ENCODE measurements at regions of chr11 and their contacts with region 1.

Region 1: DNA sequence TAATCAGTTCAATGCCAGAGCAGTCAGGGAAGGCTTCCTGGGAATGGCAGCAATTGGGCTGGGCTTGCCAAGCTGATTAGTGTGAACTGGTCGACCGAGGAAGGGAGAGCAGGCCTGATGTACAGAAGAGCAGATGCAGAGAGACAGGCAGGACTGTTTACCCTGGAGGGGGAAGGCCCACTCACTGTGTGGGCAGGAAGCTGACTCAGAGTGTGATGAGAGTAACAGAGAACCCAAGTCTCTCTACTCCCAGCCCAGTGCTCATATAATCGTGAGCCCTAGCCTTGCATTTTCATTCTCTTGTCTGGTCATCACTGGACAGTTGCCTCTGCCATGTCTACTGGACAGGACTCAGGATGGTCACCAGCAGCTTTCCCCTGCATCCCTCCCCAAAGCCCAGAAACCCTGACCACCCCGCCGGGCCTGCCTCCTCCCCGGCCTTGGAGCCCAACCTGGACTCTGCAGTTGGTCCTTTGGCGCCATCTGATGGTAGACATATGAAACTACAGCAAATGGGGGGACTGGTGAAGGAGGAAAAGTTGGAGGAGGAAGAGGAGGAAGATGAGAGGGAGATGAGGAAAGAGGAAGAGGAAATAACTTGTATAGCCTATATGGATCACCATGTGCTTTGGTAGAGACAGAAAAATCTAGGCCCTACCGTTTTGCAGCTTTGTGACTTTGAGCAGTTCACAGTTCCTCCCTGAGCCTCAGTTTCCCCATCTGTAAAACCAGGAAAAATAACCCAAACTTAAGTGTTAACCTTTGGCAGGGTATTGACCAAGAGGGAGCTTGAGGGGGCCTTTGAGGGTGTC is 43.4 kb upstream of the PRDM11 start:
- DNase-seq: peak; percentile 91
- ATAC-seq: peak; percentile 98
- H3K4me3 Mint-ChIP-seq: peak overlapping the region; percentile 60
- H3K27ac Mint-ChIP-seq: peak overlapping the region; percentile 78
- H3K4me1 Mint-ChIP-seq: peaks cover 13% of the 10 kb centered on the region
- H3K27me3 Mint-ChIP-seq: peaks cover 10% of the 10 kb centered on the region
- CTCF ChIP-seq: peak; percentile 98

Region 2: DNA sequence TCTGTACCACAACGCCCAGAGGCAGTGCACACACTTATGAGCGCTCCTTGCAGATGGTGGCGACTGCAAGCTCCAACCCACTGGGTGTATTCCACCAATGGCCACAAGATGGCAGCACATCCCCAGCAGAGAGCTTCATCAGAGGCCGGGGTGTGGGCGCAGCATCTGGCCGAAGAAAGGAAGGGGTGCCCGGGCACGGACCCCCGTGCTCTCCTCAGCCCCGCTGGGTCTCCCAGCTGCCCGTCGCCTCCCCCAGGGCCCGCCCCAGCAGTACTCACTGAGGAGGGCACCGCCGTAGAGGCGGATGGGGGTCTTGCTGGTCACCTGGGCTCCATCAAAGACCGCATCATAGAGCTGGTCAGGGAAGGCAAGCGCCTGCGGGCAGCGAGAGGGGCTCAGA is 166.5 kb before region 1 on chr11:
- CTCF ChIA-PET with region 1: interaction called, 942 read pairs
- POLR2A ChIA-PET with region 1: interaction called, 27 read pairs
- intact Hi-C with region 1: loop called (anchors 1 kb)
- DNase-seq: peak; percentile 88
- ATAC-seq: peak; percentile 97
- H3K4me3 Mint-ChIP-seq: no peak overlapping the region
- H3K27ac Mint-ChIP-seq: no peak overlapping the region
- H3K4me1 Mint-ChIP-seq: no peaks in the 10 kb centered on the region
- H3K27me3 Mint-ChIP-seq: no peaks in the 10 kb centered on the region
- CTCF ChIP-seq: peak; percentile 97

Region 3: GRCh38 chr11:44964526-44965209 is 138.3 kb before region 1 on chr11:
- CTCF ChIA-PET with region 1: interaction called, 10 read pairs
- POLR2A ChIA-PET with region 1: no interaction called
- intact Hi-C with region 1: no loop called
- DNase-seq: no peak
- ATAC-seq: no peak
- H3K4me3 Mint-ChIP-seq: no peak overlapping the region
- H3K27ac Mint-ChIP-seq: no peak overlapping the region
- H3K4me1 Mint-ChIP-seq: no peaks in the 10 kb centered on the region
- H3K27me3 Mint-ChIP-seq: no peaks in the 10 kb centered on the region
- CTCF ChIP-seq: no peak

Region 4: DNA sequence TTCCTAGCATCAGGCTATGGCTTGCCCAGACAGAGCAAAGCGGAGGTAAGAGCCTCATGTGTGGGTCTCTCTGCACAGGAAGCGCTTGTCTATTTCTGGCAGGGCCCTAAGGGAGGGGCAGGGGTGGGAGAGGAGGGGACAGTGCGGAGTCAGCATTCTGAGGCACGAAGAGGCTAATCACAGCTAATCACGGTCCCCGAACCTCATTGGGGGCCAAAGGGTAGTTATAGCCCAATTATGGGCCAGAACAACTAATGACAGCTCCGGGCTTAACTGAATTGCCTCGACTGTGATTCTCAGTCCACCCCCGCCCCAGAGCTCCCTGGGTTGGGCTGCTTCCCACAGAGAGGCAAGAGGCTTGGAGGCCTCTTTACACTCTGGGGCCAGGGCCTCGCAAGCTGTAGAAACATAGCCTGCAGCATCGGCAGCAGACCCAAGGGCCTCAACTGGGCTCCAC is 29.3 kb before region 1 on chr11:
- CTCF ChIA-PET with region 1: interaction called, 37 read pairs
- POLR2A ChIA-PET with region 1: interaction called, 3 read pairs
- intact Hi-C with region 1: no loop called
- DNase-seq: peak; percentile 37
- ATAC-seq: peak; percentile 88
- H3K4me3 Mint-ChIP-seq: no peak overlapping the region
- H3K27ac Mint-ChIP-seq: no peak overlapping the region
- H3K4me1 Mint-ChIP-seq: peaks cover 13% of the 10 kb centered on the region
- H3K27me3 Mint-ChIP-seq: no peaks in the 10 kb centered on the region
- CTCF ChIP-seq: no peak

Region 5: GRCh38 chr11:45089676-45090499 is 13.1 kb before region 1 on chr11:
- CTCF ChIA-PET with region 1: interaction called, 16 read pairs
- POLR2A ChIA-PET with region 1: no interaction called
- intact Hi-C with region 1: no loop called
- DNase-seq: peak; percentile 46
- ATAC-seq: peak; percentile 46
- H3K4me3 Mint-ChIP-seq: no peak overlapping the region
- H3K27ac Mint-ChIP-seq: no peak overlapping the region
- H3K4me1 Mint-ChIP-seq: peaks cover 19% of the 10 kb centered on the region
- H3K27me3 Mint-ChIP-seq: no peaks in the 10 kb centered on the region
- CTCF ChIP-seq: no peak